ENCODE measurements at regions of chr6 and their contacts with region 1.

Region 1: DNA sequence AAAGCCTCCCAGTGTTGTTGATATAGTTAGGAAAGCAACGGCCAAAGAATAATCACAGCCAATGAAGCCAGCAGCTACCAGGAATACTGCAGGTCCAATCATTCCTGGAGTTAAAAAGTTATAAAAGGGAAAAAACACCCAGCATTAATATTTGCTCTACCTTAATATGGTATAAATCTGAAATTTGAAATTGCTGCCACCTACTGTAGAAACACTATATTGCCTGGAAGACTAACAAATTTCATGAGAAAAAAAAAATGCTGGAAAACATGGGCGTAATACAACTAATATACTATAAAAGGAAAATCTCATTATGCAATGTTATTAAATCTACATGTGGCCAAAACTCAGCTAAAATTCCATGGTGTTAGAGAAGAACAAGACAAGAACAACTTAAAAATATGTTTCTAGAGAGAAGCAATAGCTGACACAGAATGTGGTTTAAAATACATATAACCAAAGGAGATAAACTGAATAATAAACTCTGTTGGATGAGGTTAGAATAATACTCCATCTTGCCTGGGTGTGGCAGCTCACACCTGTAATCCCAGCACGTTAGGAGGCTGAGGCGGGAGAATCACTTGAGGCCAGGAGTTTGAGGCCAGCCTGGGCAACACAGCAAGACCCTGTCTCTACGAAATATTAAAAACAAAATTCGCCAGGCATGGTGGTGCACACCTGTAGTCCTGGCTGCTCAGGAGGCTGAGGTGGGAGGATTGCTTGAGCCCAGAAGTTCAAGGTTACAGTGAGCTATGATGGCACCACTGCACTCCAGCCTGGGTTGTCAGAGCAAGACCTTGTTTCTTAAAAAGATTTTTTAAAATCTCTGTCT is 43.1 kb downstream of the SLC17A5 start:
- DNase-seq: no peak
- H3K4me3 ChIP-seq: no peak overlapping the region
- H3K27ac ChIP-seq: peak overlapping the region in 1 of 2 donors; percentile 52
- H3K4me1 ChIP-seq: no peaks in the 10 kb centered on the region
- H3K27me3 ChIP-seq: no peaks in the 10 kb centered on the region
- CTCF ChIP-seq: peak; percentile 68 to 74 (median 70)
- POLR2A ChIP-seq: no peak

Region 2: GRCh38 chr6:73515204-73515655 is 95.4 kb before region 1 on chr6:
- intact Hi-C with region 1: loop called (anchors 2 kb)
- DNase-seq: no peak
- H3K4me3 ChIP-seq: no peak overlapping the region
- H3K27ac ChIP-seq: peak overlapping the region in 1 of 2 donors; percentile 48
- H3K4me1 ChIP-seq: peaks cover 0 to 4% of the 10 kb centered on the region in 2 donors
- H3K27me3 ChIP-seq: no peaks in the 10 kb centered on the region
- CTCF ChIP-seq: no peak
- POLR2A ChIP-seq: no peak

Region 3: DNA sequence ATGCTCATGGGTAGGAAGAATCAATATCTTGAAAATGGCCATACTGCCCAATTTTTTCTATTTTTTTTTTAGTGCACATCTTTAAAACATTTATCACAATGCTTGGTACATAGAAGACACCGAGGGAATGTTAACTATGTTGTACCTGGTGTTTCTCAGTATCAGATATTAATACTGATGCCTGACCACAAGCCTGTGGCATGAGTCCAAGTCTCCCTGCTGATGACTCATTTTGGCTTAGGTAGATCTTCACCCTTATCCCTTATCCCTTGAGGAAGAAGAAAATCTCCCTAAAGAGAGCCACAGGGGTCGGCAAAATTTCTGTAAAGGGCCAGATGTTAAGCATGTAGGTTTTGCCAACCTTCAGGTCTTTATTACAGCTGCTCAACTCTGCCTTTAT is 99.8 kb after region 1 on chr6:
- intact Hi-C with region 1: no loop called
- DNase-seq: peak; percentile 30 to 54
- H3K4me3 ChIP-seq: no peak overlapping the region
- H3K27ac ChIP-seq: no peak overlapping the region
- H3K4me1 ChIP-seq: no peaks in the 10 kb centered on the region
- H3K27me3 ChIP-seq: no peaks in the 10 kb centered on the region
- CTCF ChIP-seq: no peak
- POLR2A ChIP-seq: no peak

Region 4: DNA sequence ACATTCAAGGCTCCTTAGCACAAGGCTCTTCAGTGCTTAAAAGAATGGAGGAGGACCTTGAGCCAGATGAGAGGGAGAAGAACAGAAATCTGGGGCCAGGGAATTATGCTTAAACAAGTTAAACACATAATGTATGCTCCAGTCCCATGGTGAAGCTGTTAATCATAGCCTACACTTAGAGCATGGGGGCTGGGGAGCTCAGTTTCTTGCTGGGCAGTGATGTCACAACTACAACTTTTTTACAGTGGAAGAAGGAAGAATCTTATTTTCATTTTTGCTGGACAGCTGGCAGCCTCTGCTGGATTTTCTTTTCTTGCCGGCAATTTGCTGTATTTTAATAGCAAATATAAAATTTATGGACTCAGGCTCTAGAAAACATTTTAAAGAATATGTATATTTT is 517.9 kb after region 1 on chr6:
- intact Hi-C with region 1: no loop called
- DNase-seq: no peak
- H3K4me3 ChIP-seq: no peak overlapping the region
- H3K27ac ChIP-seq: no peak overlapping the region
- H3K4me1 ChIP-seq: no peaks in the 10 kb centered on the region
- H3K27me3 ChIP-seq: no peaks in the 10 kb centered on the region
- CTCF ChIP-seq: no peak
- POLR2A ChIP-seq: no peak